ENCODE measurements at regions of chr6 and their contacts with region 1.

Region 1: DNA sequence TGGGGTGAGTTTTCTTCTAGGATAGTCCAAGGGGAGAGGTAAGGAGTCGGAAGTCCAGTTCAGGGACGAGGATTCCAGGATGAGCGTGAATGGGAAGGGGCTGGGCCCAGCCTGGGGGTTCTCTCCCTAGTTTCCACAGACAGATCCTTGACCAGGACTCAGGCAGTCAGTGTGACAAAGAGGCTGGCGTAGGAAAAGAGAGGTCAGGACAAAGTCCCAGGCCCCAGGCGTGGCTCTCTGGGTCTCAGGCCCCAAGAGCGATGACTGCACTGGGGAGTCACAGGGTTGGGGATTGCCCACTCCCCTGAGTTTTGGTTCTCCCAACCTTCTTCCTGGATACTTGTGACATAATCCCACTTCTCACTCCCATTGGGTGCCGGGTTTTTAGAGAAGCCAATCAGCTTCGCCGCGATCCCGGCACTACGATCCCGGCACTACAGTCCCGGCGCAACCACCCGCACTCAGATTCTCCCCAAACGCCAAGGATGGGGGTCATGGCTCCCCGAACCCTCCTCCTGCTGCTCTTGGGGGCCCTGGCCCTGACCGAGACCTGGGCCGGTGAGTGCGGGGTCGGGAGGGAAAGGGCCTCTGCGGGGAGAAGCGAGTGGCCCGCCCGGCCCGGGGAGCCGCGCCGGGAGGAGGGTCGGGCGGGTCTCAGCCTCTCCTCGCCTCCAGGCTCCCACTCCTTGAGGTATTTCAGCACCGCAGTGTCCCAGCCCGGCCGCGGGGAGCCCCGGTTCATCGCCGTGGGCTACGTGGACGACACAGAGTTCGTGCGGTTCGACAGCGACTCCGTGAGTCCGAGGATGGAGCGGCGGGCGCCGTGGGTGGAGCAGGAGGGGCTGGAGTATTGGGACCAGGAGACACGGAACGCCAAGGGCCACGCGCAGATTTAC is 46.2 kb upstream of the TRIM26 start:
- DNase-seq: peak; percentile 56 to 81
- ATAC-seq: peak; percentile 94 to 97 (median 96)
- H3K4me3 ChIP-seq: peak overlapping the region; percentile 48 to 99 (median 89)
- H3K27ac ChIP-seq: peak overlapping the region in 9 of 10 donors; percentile 56 to 91 (median 79)
- H3K4me1 ChIP-seq: peaks cover 0 to 17% (median 7%) of the 10 kb centered on the region in 9 donors
- H3K27me3 ChIP-seq: peaks cover 0 to 20% (median 0%) of the 10 kb centered on the region in 7 donors
- CTCF ChIP-seq: peak in 7 of 9 donors; percentile 17 to 59 (median 31)

Region 2: DNA sequence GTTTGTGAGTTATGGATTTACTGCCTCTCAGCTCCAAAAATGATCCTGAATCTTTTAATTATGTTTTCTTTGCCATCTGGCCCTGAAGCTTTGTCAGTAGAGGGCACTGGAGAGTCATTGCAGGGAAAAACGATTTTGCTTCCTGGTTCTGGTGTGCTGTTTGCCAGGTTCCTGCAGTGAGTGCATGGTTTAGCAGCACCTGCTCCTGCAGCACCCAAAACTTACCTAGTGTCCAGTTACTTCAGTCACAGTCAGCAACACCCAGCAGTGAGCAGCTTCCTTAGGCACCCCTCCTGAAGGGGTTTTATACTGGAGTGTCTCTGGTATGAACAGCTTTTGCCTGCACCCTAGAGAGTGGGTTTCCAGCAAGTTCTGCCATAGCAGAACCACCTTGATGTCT is 40.1 kb before region 1 on chr6:
- intact Hi-C with region 1: loop called in 1 of 10 experiments (anchors 2 kb)
- DNase-seq: peak in 1 of 2 donors; percentile 30
- ATAC-seq: peak in 4 of 8 donors; percentile 30 to 59 (median 47)
- H3K4me3 ChIP-seq: no peak overlapping the region
- H3K27ac ChIP-seq: no peak overlapping the region
- H3K4me1 ChIP-seq: peaks cover 0 to 15% (median 0%) of the 10 kb centered on the region in 9 donors
- H3K27me3 ChIP-seq: no peaks in the 10 kb centered on the region
- CTCF ChIP-seq: peak; percentile 52 to 91 (median 82)

Measured in heart right ventricle (tissue), 16 donors.